Activated CD8-positive, alpha-beta memory T cell treated with anti-CD3 and anti-CD28 coated beads, Interleukin-2, amount 10 ng/mL, durations not matched to agents 7 days and 5 days (primary cell): ENCODE measurements at regions of chr11 and their contacts with region 1.

Region 1: GRCh38 chr11:64846998-64847666 is 2.7 kb upstream of the CDC42BPG start:
- DNase-seq: peak; percentile 94
- ATAC-seq: peak; percentile 73
- H3K4me3 Mint-ChIP-seq: no peak overlapping the region
- H3K27ac Mint-ChIP-seq: no peak overlapping the region
- H3K4me1 Mint-ChIP-seq: peaks cover 57% of the 10 kb centered on the region
- H3K27me3 Mint-ChIP-seq: no peaks in the 10 kb centered on the region

Region 2: DNA sequence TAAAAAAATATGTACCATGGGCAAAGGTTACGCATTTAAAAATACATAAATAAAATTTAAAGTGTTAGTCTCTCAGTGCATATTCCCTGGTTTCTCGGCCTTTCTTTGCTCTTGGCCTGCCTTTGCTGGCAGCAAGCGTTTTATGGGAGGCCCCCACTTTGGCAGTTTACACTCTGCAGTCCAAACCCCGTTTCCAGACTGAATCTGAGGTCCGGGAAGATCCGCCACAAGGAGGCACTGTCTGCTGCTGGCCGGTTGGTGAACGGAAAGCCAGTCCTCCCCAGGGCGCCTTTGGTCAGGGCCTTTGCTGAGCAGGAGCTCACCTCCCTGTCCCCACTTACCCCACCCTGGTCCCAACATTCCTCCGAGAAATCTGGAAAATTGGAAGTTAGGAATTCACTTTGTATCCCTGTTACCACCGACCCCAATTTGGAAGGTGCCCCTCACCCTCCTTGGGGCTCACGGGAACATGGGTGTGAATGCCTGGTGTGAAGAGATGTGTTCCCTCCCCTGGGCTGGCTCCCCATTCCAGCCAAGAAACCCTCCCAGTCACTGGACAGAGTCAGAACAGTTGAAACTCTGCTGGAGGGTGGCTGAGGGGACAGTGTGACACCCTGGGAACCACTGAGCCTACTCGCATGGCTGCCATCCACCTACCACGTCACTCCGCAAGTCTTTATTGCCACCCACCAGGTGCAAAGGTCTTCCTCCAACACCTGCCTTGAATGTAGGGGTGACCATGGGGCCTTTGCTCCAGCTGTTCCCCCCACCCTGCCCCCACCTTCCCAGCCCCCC is 59.4 kb before region 1 on chr11:
- CTCF ChIA-PET with region 1: interaction called, 19 read pairs
- DNase-seq: peak; percentile 65
- ATAC-seq: peak; percentile 63
- H3K4me3 Mint-ChIP-seq: no peak overlapping the region
- H3K27ac Mint-ChIP-seq: peak overlapping the region; percentile 28
- H3K4me1 Mint-ChIP-seq: no peaks in the 10 kb centered on the region
- H3K27me3 Mint-ChIP-seq: no peaks in the 10 kb centered on the region

Region 3: DNA sequence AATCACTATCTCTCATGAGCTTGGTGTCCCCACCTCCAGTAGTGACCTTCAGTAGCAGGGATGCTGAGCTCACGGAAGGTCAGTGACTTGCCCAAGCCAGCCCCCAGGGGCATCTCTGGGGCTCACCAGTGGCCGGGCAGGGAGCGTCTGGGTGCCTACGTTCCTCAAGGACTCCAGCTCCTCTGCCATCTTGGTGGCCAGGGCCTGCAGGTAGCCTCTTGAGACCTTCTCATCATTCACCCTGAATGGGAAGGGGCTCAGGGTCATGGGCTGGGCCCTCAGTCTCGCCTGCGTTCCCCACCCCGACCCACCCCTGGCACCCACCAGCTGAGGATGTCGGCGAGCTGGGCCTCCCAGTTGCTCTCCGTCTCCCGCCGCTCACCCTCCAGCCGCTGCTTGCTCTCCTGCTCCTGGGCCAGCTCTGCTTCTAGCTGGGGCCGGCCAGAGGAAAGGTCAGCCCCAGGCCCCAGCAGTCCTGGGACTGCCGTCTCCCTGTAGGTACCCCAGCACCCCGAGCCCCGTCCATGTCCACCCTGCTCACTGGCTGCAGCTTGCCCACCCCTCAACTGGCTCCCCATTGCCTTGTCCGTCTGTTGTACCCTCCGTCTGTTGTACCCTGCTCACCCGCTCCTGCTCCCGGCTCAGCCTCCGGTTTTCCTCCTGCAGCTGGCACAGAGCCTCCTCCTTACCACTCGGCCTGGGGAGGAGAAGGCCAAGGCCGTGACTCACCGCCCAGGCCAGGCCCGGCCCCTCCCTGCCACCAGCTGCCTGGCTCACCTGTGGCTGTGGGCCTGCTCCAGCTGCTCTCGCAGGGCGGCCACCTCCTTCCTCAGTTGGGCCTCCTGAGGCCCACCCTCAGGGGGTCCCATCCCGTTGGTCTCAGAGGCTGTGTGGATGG is 12.2 kb before region 1 on chr11:
- CTCF ChIA-PET with region 1: interaction called, 409 read pairs
- DNase-seq: no peak
- ATAC-seq: no peak
- H3K4me3 Mint-ChIP-seq: no peak overlapping the region
- H3K27ac Mint-ChIP-seq: no peak overlapping the region
- H3K4me1 Mint-ChIP-seq: peaks cover 10% of the 10 kb centered on the region
- H3K27me3 Mint-ChIP-seq: no peaks in the 10 kb centered on the region

Region 4: GRCh38 chr11:64864473-64865285 is 17.5 kb after region 1 on chr11:
- CTCF ChIA-PET with region 1: interaction called, 409 read pairs
- DNase-seq: peak; percentile 80
- ATAC-seq: peak; percentile 27
- H3K4me3 Mint-ChIP-seq: peak overlapping the region; percentile 54
- H3K27ac Mint-ChIP-seq: peak overlapping the region; percentile 98
- H3K4me1 Mint-ChIP-seq: peaks cover 93% of the 10 kb centered on the region
- H3K27me3 Mint-ChIP-seq: no peaks in the 10 kb centered on the region

Region 5: GRCh38 chr11:64878494-64879243 is 31.5 kb after region 1 on chr11 and contains the start of gene EHD1:
- CTCF ChIA-PET with region 1: interaction called, 1,163 read pairs
- DNase-seq: peak; percentile 100
- ATAC-seq: peak; percentile 75
- H3K4me3 Mint-ChIP-seq: peak within 1 kb of the TSS; percentile 94
- H3K27ac Mint-ChIP-seq: peak within 1 kb of the TSS; percentile 93
- H3K4me1 Mint-ChIP-seq: peaks cover 66% of the 10 kb centered on the region
- H3K27me3 Mint-ChIP-seq: no peaks in the 10 kb centered on the region
- total RNA-seq, gene EHD1: 149 to 155 TPM

Region 6: GRCh38 chr11:64996710-64997380 is 149.7 kb after region 1 on chr11 and contains the start of gene BATF2:
- CTCF ChIA-PET with region 1: interaction called, 15 read pairs
- DNase-seq: peak; percentile 50
- ATAC-seq: peak; percentile 66
- H3K4me3 Mint-ChIP-seq: peak within 1 kb of the TSS; percentile 60
- H3K27ac Mint-ChIP-seq: peak within 1 kb of the TSS; percentile 70
- H3K4me1 Mint-ChIP-seq: peaks cover 30% of the 10 kb centered on the region
- H3K27me3 Mint-ChIP-seq: no peaks in the 10 kb centered on the region
- total RNA-seq, gene BATF2: 0.33 to 0.67 TPM

Region 7: GRCh38 chr11:65117216-65118096 is 270.3 kb after region 1 on chr11 and contains the start of gene ZNHIT2:
- CTCF ChIA-PET with region 1: interaction called, 15 read pairs
- DNase-seq: peak; percentile 100
- ATAC-seq: peak; percentile 71
- H3K4me3 Mint-ChIP-seq: peak within 1 kb of the TSS; percentile 86
- H3K27ac Mint-ChIP-seq: peak within 1 kb of the TSS; percentile 91
- H3K4me1 Mint-ChIP-seq: peaks cover 64% of the 10 kb centered on the region
- H3K27me3 Mint-ChIP-seq: no peaks in the 10 kb centered on the region
- total RNA-seq, gene ZNHIT2: 10.5 to 13.5 TPM